Common myeloid progenitor, CD34-positive (primary cell): ENCODE measurements at regions of chr19 and their contacts with region 1.

Region 1: GRCh38 chr19:53471916-53472315 is 4.4 kb downstream of the ZNF813 start:
- DNase-seq: no peak
- H3K4me3 ChIP-seq: no peak overlapping the region
- H3K27ac ChIP-seq: no peak overlapping the region
- H3K4me1 ChIP-seq: peaks cover 0 to 18% (median 9%) of the 10 kb centered on the region in 4 experiments
- H3K27me3 ChIP-seq: no peaks in the 10 kb centered on the region

Region 2: DNA sequence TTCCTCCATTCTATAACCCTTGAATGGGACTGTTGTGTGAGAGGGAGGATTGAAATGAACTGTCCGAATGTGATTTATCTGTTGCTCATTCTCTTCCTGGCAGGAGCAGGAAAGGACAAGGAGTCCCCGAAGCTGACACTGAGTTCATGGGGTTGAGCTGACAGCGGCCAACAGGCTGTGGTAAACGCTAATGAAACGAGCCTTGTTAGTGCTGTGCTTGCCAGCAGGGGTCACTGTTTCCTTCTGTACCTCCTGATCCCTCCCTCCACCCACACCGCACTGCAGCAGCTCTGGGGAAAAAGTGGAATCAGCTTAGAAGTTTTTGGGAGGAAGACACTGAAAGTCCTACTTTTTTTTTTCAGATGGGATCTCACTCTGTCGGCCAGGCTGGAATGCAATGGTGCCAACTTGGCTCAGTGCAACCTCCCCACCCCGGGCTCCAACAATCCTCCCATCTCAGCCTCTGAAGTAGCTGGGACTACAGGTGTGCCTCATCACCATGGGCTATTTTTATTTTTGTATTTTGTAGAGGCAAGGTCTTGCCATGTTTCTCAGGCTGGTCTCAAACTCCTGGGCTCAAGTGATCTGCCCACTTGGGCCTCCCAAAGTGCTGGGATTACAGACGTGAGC is 46.8 kb before region 1 on chr19:
- CTCF ChIA-PET with region 1: interaction called, 46 read pairs
- POLR2A ChIA-PET with region 1: no interaction called
- DNase-seq: peak; percentile 71 to 88 (median 82)
- H3K4me3 ChIP-seq: no peak overlapping the region
- H3K27ac ChIP-seq: no peak overlapping the region
- H3K4me1 ChIP-seq: peaks cover 0 to 3% (median 0%) of the 10 kb centered on the region in 4 experiments
- H3K27me3 ChIP-seq: no peaks in the 10 kb centered on the region

Region 3: DNA sequence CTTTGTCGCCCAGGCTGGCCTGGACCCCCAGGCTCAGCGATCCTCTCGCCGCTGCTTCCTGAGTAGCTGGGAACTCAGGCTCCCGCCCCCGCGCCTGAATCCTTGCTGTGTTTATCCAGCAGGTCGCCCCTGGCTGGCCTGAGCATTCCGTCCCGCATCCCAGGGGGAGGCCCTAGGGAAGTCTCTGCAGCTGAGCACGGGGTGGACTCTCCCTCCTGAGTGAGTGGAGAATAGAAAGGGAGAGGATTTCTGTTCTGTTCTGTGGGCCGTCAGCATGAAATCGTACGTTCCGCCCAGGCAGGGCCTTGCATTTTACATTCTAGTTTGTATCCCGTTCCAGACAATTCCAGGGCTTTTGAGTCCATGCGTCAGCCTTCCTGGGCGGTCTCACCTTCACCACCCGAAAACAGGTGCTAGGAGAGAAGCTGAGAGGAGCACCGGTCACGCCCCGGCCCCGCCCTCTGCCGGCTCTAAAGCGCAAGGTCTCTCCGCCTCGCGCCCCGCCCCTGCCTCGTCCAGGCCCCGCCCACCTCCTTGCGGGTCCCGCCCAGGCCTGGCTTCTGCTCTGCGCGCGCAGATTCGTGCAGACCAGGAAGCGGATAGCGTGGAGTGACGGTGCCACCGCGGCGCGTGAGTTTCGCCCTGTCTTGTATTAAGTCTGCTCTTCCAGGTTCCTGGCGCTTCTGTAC is 40.4 kb before region 1 on chr19 and contains the start of gene ZNF761:
- CTCF ChIA-PET with region 1: interaction called, 46 read pairs
- POLR2A ChIA-PET with region 1: interaction called, 3 read pairs
- DNase-seq: peak; percentile 90 to 94 (median 94)
- H3K4me3 ChIP-seq: peak within 1 kb of the TSS; percentile 62 to 95 (median 93)
- H3K27ac ChIP-seq: peak within 1 kb of the TSS; percentile 72 to 91
- H3K4me1 ChIP-seq: peaks cover 0 to 16% (median 12%) of the 10 kb centered on the region in 4 experiments
- H3K27me3 ChIP-seq: no peaks in the 10 kb centered on the region